CD4-positive, alpha-beta T cell (primary cell): ENCODE measurements at regions of chr19 and their contacts with region 1.

Region 1: GRCh38 chr19:11482384-11483050 is 1.7 kb upstream of the ELAVL3 start:
- DNase-seq: peak; percentile 58 to 95 (median 78)
- ATAC-seq: peak; percentile 73
- H3K4me3 ChIP-seq: peak overlapping the region; percentile 7
- H3K4me3 Mint-ChIP-seq: peak overlapping the region; percentile 2
- H3K27ac ChIP-seq: no peak overlapping the region
- H3K27ac Mint-ChIP-seq: no peak overlapping the region
- H3K4me1 ChIP-seq: peaks cover 36% of the 10 kb centered on the region
- H3K4me1 Mint-ChIP-seq: peaks cover 22% of the 10 kb centered on the region
- H3K27me3 ChIP-seq: peaks cover 27 to 35% of the 10 kb centered on the region in 2 experiments
- H3K27me3 Mint-ChIP-seq: peaks cover 52% of the 10 kb centered on the region
- CTCF ChIP-seq: peak; percentile 82

Region 2: DNA sequence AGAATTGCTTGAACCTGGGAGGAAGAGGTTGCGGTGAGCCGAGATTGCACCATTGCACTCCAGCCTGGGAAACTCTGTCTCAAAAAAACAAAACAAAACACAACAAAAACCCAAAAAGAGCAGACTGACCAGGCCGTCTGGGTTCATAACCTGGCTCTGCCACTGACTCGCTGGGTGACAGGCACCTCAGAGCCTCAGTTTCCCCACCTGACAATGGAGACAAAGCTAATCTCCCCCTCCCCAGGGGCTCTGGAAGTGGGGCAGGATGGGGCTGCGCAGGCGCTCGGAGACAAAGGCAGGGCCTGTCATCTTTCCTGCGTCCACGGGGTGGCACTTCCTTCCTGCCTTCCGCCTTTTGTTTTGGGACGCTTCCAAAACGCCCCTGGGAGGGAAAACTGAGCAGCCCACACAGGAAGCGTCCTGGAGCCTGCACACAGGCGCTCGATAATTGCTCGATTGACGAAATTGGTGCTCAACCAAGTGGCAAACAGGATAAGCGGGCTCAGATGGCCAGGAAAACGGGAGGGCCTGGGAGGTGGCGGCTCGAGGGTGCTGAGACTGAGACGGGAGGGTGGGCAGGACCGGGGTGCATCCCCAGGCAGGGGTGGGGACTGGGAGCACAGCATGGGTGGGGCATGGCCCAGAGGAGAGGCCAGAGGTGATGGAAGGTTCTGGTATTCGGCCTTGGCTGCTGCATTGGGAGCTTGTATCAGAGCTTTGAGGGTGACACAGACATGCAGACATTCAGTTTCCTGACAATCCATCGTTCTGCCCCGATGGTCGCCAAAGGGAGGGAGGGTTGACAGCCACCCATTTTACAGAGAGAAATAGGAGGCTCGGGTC is 344.8 kb before region 1 on chr19:
- CTCF ChIA-PET with region 1: no interaction called
- POLR2A ChIA-PET with region 1: no interaction called
- intact Hi-C with region 1: loop called in 1 of 2 experiments (anchors 1 kb)
- DNase-seq: peak; percentile 27 to 80 (median 49)
- ATAC-seq: peak; percentile 92
- H3K4me3 ChIP-seq: peak overlapping the region; percentile 51
- H3K4me3 Mint-ChIP-seq: peak overlapping the region; percentile 83
- H3K27ac ChIP-seq: no peak overlapping the region
- H3K27ac Mint-ChIP-seq: peak overlapping the region; percentile 8
- H3K4me1 ChIP-seq: peaks cover 25% of the 10 kb centered on the region
- H3K4me1 Mint-ChIP-seq: peaks cover 8% of the 10 kb centered on the region
- H3K27me3 ChIP-seq: no peaks in the 10 kb centered on the region
- H3K27me3 Mint-ChIP-seq: no peaks in the 10 kb centered on the region
- CTCF ChIP-seq: peak; percentile 74

Region 3: GRCh38 chr19:11242864-11243797 is 239.4 kb before region 1 on chr19:
- CTCF ChIA-PET with region 1: no interaction called
- POLR2A ChIA-PET with region 1: interaction called, 3 read pairs
- intact Hi-C with region 1: loop called (anchors 1 to 5 kb)
- DNase-seq: peak; percentile 71 to 87 (median 78)
- ATAC-seq: peak; percentile 99
- H3K4me3 ChIP-seq: no peak overlapping the region
- H3K4me3 Mint-ChIP-seq: no peak overlapping the region
- H3K27ac ChIP-seq: no peak overlapping the region
- H3K27ac Mint-ChIP-seq: no peak overlapping the region
- H3K4me1 ChIP-seq: peaks cover 9% of the 10 kb centered on the region
- H3K4me1 Mint-ChIP-seq: peaks cover 5% of the 10 kb centered on the region
- H3K27me3 ChIP-seq: peaks cover 5 to 15% of the 10 kb centered on the region in 2 experiments
- H3K27me3 Mint-ChIP-seq: peaks cover 46% of the 10 kb centered on the region
- CTCF ChIP-seq: peak; percentile 67

Region 4: DNA sequence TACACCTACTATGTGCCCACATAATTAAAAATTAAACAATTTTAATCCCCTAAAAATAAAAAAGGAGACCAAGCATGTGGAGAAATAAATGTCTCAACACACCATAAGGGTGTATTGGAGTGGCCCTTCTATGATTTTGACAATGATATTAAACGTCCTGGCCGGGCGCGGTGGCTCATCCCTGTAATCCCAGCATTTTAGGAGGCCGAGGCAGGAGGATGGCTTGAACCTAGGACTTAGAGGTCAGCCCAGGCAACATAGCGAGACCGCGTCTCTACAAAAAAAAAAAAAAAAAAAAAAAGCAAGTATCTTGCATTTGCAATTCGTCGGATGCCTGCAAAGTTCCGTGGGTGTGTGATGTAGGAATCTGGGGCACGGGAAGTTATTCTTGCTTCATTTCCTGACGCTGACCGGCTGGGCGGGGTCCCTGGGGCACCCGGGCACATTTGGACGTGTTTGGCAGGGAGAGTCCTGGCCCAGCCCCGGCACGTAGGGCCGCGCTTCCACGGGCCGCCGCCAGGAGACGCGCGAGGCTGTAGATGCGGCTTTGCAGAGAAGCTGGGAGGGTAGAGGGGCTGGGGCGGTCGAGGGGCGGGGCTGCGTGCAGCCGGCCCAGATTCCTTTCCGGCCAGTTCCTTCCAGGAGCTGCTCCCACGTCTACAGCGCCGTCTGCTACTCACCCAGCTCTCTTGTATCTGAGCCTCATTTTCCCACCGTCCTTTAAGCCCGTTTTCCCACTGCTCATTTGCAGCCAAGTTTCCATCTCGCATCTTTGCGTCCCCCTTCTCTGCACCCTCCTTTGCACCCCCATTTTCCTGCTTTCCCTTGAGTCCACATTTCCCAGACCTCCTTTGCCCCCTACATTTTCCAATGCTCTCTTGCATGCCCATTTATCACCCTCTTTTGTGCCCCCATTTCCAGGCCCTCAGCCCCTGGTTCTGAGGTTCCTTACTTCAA is 188.8 kb before region 1 on chr19:
- CTCF ChIA-PET with region 1: interaction called, 9 read pairs
- POLR2A ChIA-PET with region 1: no interaction called
- intact Hi-C with region 1: loop called (anchors 1 kb)
- DNase-seq: peak; percentile 57 to 87 (median 77)
- ATAC-seq: peak; percentile 98
- H3K4me3 ChIP-seq: no peak overlapping the region
- H3K4me3 Mint-ChIP-seq: no peak overlapping the region
- H3K27ac ChIP-seq: no peak overlapping the region
- H3K27ac Mint-ChIP-seq: no peak overlapping the region
- H3K4me1 ChIP-seq: peaks cover 11% of the 10 kb centered on the region
- H3K4me1 Mint-ChIP-seq: peaks cover 9% of the 10 kb centered on the region
- H3K27me3 ChIP-seq: peaks cover 14 to 16% of the 10 kb centered on the region in 2 experiments
- H3K27me3 Mint-ChIP-seq: peaks cover 39% of the 10 kb centered on the region
- CTCF ChIP-seq: peak; percentile 86

Region 5: DNA sequence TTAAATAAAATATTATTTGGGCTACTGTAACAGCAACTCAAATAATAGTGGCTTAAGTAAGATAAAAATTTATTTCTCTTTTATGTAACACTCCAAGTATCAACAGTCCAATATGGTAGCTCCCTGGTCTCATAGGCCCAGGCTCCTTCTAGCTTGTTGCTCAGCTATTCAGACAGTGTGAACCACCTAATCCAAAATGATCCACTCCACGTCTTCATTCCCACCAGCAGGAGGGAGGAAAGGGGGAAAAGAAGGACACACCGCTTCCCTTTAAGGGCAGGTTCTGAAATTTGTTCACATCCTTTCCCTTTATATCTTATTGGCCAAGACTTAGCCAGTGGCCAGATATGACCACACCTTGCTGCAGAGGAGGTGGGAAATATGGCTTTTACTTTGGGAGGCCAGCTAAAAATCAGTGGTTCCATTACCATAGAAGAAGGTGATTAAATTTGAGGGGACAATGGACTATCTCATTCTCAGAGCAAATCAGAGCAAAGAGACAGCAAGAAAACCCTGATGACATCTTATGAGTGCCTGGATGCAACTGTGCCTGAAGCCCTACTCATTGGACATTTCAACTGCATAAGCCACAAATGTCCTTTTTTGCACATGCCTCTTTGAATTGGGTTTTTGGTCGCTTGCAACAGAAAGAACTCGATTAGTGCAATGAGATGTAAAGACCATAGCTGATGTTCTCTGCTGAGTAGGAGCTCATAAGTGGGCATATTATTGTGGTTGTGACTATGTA is 91.4 kb before region 1 on chr19:
- CTCF ChIA-PET with region 1: no interaction called
- POLR2A ChIA-PET with region 1: no interaction called
- intact Hi-C with region 1: no loop called
- DNase-seq: no peak
- ATAC-seq: no peak
- H3K4me3 ChIP-seq: no peak overlapping the region
- H3K4me3 Mint-ChIP-seq: no peak overlapping the region
- H3K27ac ChIP-seq: no peak overlapping the region
- H3K27ac Mint-ChIP-seq: no peak overlapping the region
- H3K4me1 ChIP-seq: peaks cover 3% of the 10 kb centered on the region
- H3K4me1 Mint-ChIP-seq: peaks cover 6% of the 10 kb centered on the region
- H3K27me3 ChIP-seq: no peaks in the 10 kb centered on the region
- H3K27me3 Mint-ChIP-seq: peaks cover 10% of the 10 kb centered on the region
- CTCF ChIP-seq: no peak

Region 6: GRCh38 chr19:11435058-11435832 is 47.3 kb before region 1 on chr19 and contains the starts of genes ODAD3 and PRKCSH:
- CTCF ChIA-PET with region 1: interaction called, 8 read pairs
- POLR2A ChIA-PET with region 1: interaction called, 4 read pairs
- intact Hi-C with region 1: loop called (anchors 5 to 10 kb)
- DNase-seq: peak; percentile 95 to 99 (median 97)
- ATAC-seq: peak; percentile 94
- H3K4me3 ChIP-seq: peak within 1 kb of the TSS; percentile 90
- H3K4me3 Mint-ChIP-seq: peak within 1 kb of the TSS; percentile 96
- H3K27ac ChIP-seq: peak within 1 kb of the TSS; percentile 58 to 83
- H3K27ac Mint-ChIP-seq: peak within 1 kb of the TSS; percentile 84
- H3K4me1 ChIP-seq: peaks cover 26% of the 10 kb centered on the region
- H3K4me1 Mint-ChIP-seq: peaks cover 21% of the 10 kb centered on the region
- H3K27me3 ChIP-seq: no peaks in the 10 kb centered on the region
- H3K27me3 Mint-ChIP-seq: no peaks in the 10 kb centered on the region
- CTCF ChIP-seq: peak; percentile 87
- total RNA-seq, gene ODAD3: not detected
- total RNA-seq, gene PRKCSH: 257 to 260 TPM

Region 7: GRCh38 chr19:11460207-11460606 is 22.3 kb before region 1 on chr19:
- CTCF ChIA-PET with region 1: no interaction called
- POLR2A ChIA-PET with region 1: no interaction called
- intact Hi-C with region 1: no loop called
- DNase-seq: peak in 1 of 14 experiments; percentile 38
- ATAC-seq: no peak
- H3K4me3 ChIP-seq: no peak overlapping the region
- H3K4me3 Mint-ChIP-seq: no peak overlapping the region
- H3K27ac ChIP-seq: no peak overlapping the region
- H3K27ac Mint-ChIP-seq: no peak overlapping the region
- H3K4me1 ChIP-seq: no peaks in the 10 kb centered on the region
- H3K4me1 Mint-ChIP-seq: no peaks in the 10 kb centered on the region
- H3K27me3 ChIP-seq: no peaks in the 10 kb centered on the region
- H3K27me3 Mint-ChIP-seq: peaks cover 23% of the 10 kb centered on the region
- CTCF ChIP-seq: no peak